Spleen (tissue), 13 donors: ENCODE measurements at regions of chr1 and their contacts with region 1.

Region 1: GRCh38 chr1:247487057-247487456 is 29.2 kb upstream of the OR2B11 start:
- DNase-seq: no peak
- H3K4me3 ChIP-seq: no peak overlapping the region
- H3K27ac ChIP-seq: no peak overlapping the region
- H3K4me1 ChIP-seq: no peaks in the 10 kb centered on the region
- H3K27me3 ChIP-seq: no peaks in the 10 kb centered on the region
- CTCF ChIP-seq: peak; percentile 17 to 74 (median 53)
- POLR2A ChIP-seq: no peak

Region 2: GRCh38 chr1:247373721-247374141 is 113.3 kb before region 1 on chr1:
- intact Hi-C with region 1: loop called (anchors 5 kb)
- DNase-seq: peak; percentile 82
- H3K4me3 ChIP-seq: peak overlapping the region in 6 of 8 donors; percentile 10 to 63 (median 38)
- H3K27ac ChIP-seq: no peak overlapping the region
- H3K4me1 ChIP-seq: peaks cover 0 to 18% (median 8%) of the 10 kb centered on the region in 6 donors
- H3K27me3 ChIP-seq: peaks cover 0 to 22% (median 0%) of the 10 kb centered on the region in 7 donors
- CTCF ChIP-seq: peak in 9 of 11 experiments; percentile 10 to 66 (median 46)
- POLR2A ChIP-seq: no peak

Region 3: DNA sequence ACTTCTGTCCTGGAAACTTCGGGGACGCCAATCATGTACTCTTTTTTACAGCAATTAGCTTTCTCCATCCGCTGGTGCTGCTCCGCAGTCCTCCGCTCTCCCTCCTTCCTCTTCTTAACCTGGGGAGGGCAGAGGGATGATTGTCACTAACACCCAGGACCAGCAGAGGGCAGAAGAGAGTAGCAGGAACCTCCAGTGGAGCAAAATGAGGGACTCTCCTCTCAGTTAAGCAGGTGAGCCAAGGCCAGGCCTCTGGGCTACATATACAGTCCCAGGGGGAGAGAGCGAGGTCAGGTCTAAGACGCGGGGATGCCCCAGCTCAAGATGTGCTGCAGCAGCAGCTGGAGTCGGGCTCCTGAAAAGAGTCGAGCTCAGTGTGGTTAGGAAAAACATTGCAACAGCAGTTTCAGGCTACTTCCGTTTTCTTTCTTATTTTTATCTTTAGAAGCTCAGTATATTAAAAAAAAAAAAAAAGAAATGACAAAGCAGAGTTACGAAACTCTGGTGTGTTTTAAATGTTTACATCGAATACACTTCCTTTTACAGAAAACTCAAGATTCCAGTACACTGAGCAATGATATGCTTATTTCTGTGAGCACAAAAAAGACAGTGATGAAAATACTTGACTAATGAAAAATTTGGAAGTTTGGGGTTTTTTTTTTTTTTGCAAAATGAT is 96.8 kb before region 1 on chr1:
- intact Hi-C with region 1: loop called (anchors 5 kb)
- DNase-seq: peak; percentile 93
- H3K4me3 ChIP-seq: peak overlapping the region in 4 of 8 donors; percentile 16 to 49 (median 18)
- H3K27ac ChIP-seq: peak overlapping the region in 7 of 8 donors; percentile 66 to 89 (median 81)
- H3K4me1 ChIP-seq: peaks cover 0 to 23% (median 16%) of the 10 kb centered on the region in 6 donors
- H3K27me3 ChIP-seq: peaks cover 0 to 5% (median 0%) of the 10 kb centered on the region in 7 donors
- CTCF ChIP-seq: peak; percentile 85 to 95 (median 92)
- POLR2A ChIP-seq: peak in 1 of 3 donors; percentile 17